GM13976 (cell line): ENCODE measurements at regions of chr2 and their contacts with region 1.

Region 1: GRCh38 chr2:209556354-209556961 is 132.6 kb downstream of the MAP2 start:
- DNase-seq: peak; percentile 36
- CTCF ChIP-seq: peak; percentile 28

Region 2: GRCh38 chr2:209334198-209335017 is 222.1 kb before region 1 on chr2:
- in situ Hi-C with region 1: loop called (anchors 25 kb)
- DNase-seq: peak; percentile 45
- CTCF ChIP-seq: peak; percentile 77

Region 3: DNA sequence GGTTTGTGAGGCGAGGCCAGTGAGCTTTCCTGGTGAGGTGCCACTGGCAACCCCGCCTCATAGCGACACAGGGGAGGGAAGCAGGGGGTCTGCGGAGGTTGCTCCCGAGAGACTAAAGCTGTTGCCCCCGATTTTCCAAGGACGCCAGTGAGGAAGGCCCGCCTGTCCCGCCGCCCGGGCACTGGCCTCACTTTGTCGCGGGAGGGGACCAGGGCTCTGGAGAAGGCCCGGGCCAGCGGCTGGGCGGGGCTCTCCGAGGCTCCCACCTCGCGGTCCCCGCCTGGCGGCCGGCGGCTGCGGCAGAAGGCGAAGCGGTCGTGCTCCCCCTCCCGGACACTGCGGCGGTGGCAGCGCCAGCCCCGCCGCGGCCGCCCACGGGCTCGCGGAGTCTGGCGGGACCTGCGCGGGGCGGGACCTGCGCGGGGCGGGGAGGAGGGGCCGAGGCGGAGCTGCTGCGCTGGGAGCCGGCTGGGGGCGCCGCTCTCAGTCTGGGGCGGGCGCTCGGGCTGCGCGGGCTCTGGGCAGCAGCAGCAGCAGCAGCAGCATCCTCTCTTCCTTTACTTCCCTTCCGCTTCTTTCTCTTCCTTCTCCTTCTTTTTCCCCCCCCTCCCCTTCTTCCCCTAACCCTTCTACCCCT is 132.8 kb before region 1 on chr2 and contains the start of gene MAP2:
- in situ Hi-C with region 1: loop called (anchors 10 kb)
- DNase-seq: peak; percentile 90
- CTCF ChIP-seq: peak; percentile 84